PC-9 (cell line): ENCODE measurements at regions of chr7 and their contacts with region 1.

Region 1: GRCh38 chr7:25894902-25895791 is 256.9 kb upstream of the NFE2L3 start:
- DNase-seq: peak in 1 of 2 experiments; percentile 24
- H3K4me3 ChIP-seq: peak overlapping the region; percentile 40; the same call in 1 of the 2 replicates
- H3K27ac ChIP-seq: no peak overlapping the region
- H3K4me1 ChIP-seq: no peaks in the 10 kb centered on the region
- H3K27me3 ChIP-seq: no peaks in the 10 kb centered on the region
- CTCF ChIP-seq: peak; percentile 71

Region 2: DNA sequence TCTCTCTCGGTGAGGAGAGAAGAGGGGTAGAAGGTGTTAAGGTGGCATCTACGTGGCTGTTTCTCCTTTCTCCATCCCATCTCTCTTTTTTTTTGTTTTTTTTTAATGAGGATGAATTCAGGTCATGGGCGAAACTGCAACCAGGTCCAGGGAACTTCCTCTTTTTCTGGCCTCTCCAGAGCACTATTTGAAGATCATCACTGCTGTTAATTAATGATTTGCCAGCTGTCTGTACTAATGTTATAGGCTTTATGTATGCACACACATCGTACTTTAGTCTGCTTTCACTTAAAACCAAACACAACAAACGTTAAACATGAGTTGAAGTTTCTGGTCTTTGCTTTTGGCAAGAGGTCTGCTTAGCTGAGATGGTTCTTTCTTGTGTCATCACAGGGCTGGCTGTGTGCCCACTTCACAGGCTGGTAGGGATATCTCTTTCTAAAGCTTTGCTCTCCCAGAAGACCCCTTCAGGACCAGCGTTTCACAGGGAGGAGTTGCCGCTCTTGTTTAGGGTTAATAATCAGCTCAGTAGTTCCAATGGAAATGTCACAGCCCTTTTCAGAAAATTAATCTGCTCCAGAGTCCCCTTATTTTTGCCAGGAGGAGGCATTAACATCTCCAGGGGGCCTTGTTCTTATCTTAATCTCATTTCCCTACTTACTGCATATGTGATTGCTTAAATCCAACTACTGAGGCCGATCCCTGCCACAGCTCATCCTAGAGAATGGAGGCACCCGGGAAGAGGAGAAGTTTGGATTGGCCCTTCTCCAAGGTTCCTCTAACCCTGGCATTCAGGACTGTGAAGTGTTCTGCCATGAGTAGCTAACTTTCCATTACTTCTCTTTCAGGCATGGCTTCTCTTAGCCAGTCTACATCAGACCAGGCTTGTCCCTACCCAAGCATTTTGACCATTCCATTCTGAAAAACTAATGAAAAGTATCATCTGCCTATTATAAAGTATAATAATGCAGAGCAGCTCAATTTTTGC is 17.1 kb before region 1 on chr7:
- CTCF ChIA-PET with region 1: interaction called, 4 read pairs
- POLR2A ChIA-PET with region 1: interaction called, 11 read pairs
- intact Hi-C with region 1: no loop called
- DNase-seq: no peak
- H3K4me3 ChIP-seq: no peak overlapping the region
- H3K27ac ChIP-seq: no peak overlapping the region
- H3K4me1 ChIP-seq: no peaks in the 10 kb centered on the region
- H3K27me3 ChIP-seq: peaks cover 92% of the 10 kb centered on the region
- CTCF ChIP-seq: no peak

Region 3: DNA sequence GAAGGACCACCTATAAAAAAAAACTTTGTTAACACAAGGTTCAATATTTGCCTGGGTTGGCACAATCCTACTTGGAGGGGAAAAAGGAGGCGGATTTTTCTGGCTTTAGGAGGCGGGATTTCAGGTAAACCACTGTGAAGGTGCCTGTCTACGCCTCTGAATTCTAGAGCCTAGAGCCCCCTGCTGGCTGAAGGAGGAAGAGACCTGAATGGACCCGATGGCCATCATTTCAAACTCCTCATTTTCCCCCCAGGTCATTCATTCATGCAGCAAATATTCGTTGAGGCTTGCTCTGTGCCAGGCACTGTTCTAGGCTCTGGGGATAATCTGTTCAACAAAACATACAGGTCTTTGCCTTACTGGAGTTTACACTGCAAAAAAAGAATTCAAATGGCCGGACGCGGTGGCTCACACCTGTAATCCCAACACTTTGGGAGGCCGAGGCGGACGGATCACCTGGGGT is 166.6 kb after region 1 on chr7:
- CTCF ChIA-PET with region 1: interaction called, 22 read pairs
- POLR2A ChIA-PET with region 1: no interaction called
- intact Hi-C with region 1: loop called (anchors 1 kb)
- DNase-seq: peak; percentile 63 to 77
- H3K4me3 ChIP-seq: no peak overlapping the region
- H3K27ac ChIP-seq: no peak overlapping the region
- H3K4me1 ChIP-seq: no peaks in the 10 kb centered on the region
- H3K27me3 ChIP-seq: no peaks in the 10 kb centered on the region
- CTCF ChIP-seq: peak; percentile 97

Region 4: DNA sequence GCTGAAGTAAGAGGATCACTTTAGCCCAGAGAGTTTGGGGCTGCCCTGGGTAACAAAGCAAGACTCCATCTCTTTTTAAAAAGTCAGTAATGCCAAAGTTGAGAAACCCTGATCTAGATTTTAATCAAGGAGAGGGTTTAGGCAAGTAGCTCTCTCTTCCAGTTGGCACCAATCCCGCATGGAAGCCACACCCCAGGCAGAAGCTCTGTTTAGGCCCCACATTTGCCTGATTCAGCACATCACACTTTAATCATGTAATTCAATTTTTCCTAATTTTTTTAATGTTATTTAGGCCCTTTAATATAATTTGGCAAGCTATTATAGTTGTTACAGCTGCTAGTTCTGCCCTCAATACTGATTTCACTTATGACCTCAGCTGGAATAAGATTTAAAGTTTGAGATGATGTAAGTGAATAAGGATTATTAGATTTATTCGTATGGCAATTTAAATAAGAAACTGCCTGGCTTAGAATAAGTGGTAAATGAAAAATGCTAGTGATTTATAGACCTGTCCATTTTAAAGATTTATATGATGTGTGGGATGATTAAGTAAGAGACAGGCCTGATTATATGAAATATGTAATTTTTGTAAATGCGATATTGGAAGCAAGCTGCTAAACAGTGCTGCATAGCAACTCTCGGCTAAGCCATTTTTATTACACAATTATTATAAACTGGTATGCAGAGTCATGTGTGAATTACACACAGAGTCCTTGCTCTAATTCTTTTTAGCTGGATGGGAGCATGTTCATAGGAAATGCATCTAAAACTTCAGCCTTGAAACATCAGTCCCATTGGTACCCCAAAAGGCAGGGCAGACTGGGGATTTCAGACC is 176.7 kb after region 1 on chr7:
- CTCF ChIA-PET with region 1: no interaction called
- POLR2A ChIA-PET with region 1: no interaction called
- intact Hi-C with region 1: no loop called
- DNase-seq: no peak
- H3K4me3 ChIP-seq: no peak overlapping the region
- H3K27ac ChIP-seq: no peak overlapping the region
- H3K4me1 ChIP-seq: peaks cover 6% of the 10 kb centered on the region; the same call in 1 of the 2 replicates
- H3K27me3 ChIP-seq: no peaks in the 10 kb centered on the region
- CTCF ChIP-seq: no peak

Region 5: GRCh38 chr7:26278770-26279169 is 383.6 kb after region 1 on chr7:
- CTCF ChIA-PET with region 1: no interaction called
- POLR2A ChIA-PET with region 1: no interaction called
- intact Hi-C with region 1: loop called (anchors 5 kb)
- DNase-seq: peak in 1 of 2 experiments; percentile 47
- H3K4me3 ChIP-seq: no peak overlapping the region
- H3K27ac ChIP-seq: no peak overlapping the region
- H3K4me1 ChIP-seq: no peaks in the 10 kb centered on the region
- H3K27me3 ChIP-seq: no peaks in the 10 kb centered on the region
- CTCF ChIP-seq: peak; percentile 68

Region 6: DNA sequence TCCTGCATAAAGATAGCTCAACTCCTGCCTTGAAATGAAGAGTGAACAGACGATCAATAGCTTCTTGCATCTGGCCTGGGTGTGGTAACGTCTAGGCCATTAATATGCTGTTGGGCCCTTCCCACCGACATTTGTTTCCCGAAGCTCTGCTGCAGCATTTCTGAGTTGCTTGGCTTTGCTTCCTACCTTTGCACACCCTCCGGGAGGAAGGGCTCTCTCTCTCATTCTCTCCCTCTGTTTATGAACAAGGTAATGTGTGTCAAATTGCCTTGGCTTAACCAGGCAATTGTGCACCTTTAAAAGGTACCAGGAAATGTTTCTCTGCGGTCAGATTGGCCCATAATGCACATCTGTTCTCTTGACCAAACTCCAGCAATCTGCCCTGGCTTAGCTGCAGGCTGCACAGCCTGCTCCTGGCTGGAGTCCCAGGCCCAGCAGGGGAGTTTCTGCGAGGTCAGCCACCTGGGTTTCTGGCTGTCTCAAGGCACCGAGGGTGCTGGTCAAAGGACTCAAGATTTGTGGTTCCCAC is 620.2 kb after region 1 on chr7:
- CTCF ChIA-PET with region 1: no interaction called
- POLR2A ChIA-PET with region 1: no interaction called
- intact Hi-C with region 1: loop called (anchors 10 kb)
- DNase-seq: peak; percentile 96 to 100
- H3K4me3 ChIP-seq: no peak overlapping the region
- H3K27ac ChIP-seq: peak overlapping the region; percentile 58
- H3K4me1 ChIP-seq: peaks cover 33% of the 10 kb centered on the region
- H3K27me3 ChIP-seq: no peaks in the 10 kb centered on the region
- CTCF ChIP-seq: no peak

Region 7: GRCh38 chr7:27179503-27180430 is 1284.6 kb after region 1 on chr7:
- CTCF ChIA-PET with region 1: no interaction called
- POLR2A ChIA-PET with region 1: no interaction called
- intact Hi-C with region 1: loop called (anchors 5 kb)
- DNase-seq: peak in 1 of 2 experiments; percentile 62
- H3K4me3 ChIP-seq: no peak overlapping the region
- H3K27ac ChIP-seq: no peak overlapping the region
- H3K4me1 ChIP-seq: peaks cover 9% of the 10 kb centered on the region
- H3K27me3 ChIP-seq: no peaks in the 10 kb centered on the region
- CTCF ChIP-seq: peak; percentile 96